Aorta (tissue), 5 donors: ENCODE measurements at regions of chr20 and their contacts with region 1.

Region 1: DNA sequence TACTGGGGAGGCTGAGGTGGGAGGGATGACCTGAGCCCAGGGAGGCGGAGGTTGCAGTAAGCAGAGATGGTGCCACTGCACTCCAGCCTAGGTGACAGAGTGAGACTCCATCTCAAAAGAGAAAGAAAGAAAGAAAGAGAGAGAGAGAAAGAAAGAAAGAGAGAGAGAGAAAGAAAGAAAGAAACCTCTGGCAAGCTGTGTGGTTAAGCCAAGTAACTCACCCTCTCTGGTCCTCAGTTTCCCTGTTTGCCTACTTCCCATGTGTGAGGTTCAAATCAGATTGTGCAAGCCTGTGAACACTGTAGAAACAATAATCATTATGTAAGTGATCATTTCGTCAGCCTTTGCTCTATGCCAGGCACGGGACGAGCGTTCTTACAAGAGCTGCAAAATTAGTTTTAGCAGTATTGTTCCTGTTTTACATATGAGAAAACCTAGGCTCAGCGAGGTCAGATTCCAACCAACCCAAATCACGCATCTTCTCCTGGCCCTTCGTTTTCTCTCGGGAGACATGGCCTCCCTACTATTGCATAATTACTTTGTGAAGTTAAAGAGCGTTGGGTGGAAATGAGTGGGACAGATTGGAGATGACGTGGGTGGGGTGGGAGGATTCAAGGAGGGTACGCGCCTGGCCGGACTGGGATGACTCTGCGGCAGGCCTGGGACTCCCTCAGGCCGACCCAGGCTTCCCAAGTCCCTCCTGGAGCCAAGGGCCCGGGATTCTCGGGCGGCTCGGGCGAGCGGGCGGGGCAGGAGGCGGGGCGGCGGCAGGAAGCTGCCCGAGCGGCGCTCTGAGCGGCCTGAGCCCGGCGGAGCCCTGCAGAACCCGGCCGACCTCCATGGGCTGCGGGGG is at the start of gene SNX21:
- DNase-seq: peak; percentile 91 to 94
- ATAC-seq: peak; percentile 92
- H3K4me3 ChIP-seq: peak within 1 kb of the TSS; percentile 62 to 75
- H3K27ac ChIP-seq: peak within 1 kb of the TSS; percentile 71 to 92
- H3K4me1 ChIP-seq: peaks cover 0 to 1% of the 10 kb centered on the region in 2 donors
- H3K27me3 ChIP-seq: no peaks in the 10 kb centered on the region
- total RNA-seq, gene SNX21: 36.2 to 57.7 TPM

Region 2: DNA sequence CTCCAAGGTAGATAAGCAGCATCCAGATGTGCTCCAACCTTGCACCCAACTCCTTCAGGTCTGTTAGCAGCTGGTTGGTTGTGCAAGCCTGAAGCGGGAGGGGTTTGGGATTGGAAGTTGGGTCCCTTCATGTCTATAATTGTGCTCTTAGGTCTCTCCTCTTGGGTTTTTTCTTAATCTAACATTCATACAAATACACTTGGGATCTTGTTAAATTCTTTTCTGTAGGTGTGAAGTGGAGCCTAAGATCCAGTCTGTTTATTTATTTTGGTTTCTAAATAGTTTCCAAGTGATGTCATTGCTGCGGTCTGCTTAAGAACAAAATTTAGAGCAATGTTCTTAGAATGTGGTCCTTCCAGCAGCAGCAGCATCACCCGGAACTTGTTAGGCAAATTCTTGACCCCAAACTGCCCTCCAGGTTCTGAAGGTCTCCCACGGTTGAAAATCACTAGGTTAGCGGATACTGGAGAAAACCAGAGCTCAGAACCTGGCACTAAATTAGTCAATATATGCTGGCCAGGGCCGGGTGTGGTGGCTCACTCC is 15.5 kb before region 1 on chr20:
- intact Hi-C with region 1: loop called in 1 of 2 experiments (anchors 2 kb)
- DNase-seq: no peak
- ATAC-seq: peak; percentile 58
- H3K4me3 ChIP-seq: no peak overlapping the region
- H3K27ac ChIP-seq: peak overlapping the region; percentile 3 to 98
- H3K4me1 ChIP-seq: peaks cover 0 to 6% of the 10 kb centered on the region in 2 donors
- H3K27me3 ChIP-seq: no peaks in the 10 kb centered on the region

Region 3: GRCh38 chr20:45857114-45857881 is 24.0 kb after region 1 on chr20 and contains the starts of genes ACOT8 and ZSWIM3:
- intact Hi-C with region 1: loop called in 1 of 2 experiments (anchors 2 kb)
- DNase-seq: peak; percentile 90 to 96
- ATAC-seq: peak; percentile 97
- H3K4me3 ChIP-seq: peak within 1 kb of the TSS; percentile 77 to 91
- H3K27ac ChIP-seq: peak within 1 kb of the TSS in 1 of 2 donors; percentile 39
- H3K4me1 ChIP-seq: peaks cover 0 to 3% of the 10 kb centered on the region in 2 donors
- H3K27me3 ChIP-seq: no peaks in the 10 kb centered on the region
- total RNA-seq, gene ACOT8: 11.2 to 15.8 TPM
- total RNA-seq, gene ZSWIM3: 2.5 to 4.5 TPM

Region 4: GRCh38 chr20:45880988-45881788 is 47.9 kb after region 1 on chr20 and contains the start of gene ZSWIM1:
- intact Hi-C with region 1: loop called in 1 of 2 experiments (anchors 10 kb)
- DNase-seq: peak; percentile 99 to 100
- ATAC-seq: peak; percentile 97
- H3K4me3 ChIP-seq: peak within 1 kb of the TSS; percentile 29 to 45
- H3K27ac ChIP-seq: peak within 1 kb of the TSS in 1 of 2 donors; percentile 74
- H3K4me1 ChIP-seq: no peaks in the 10 kb centered on the region
- H3K27me3 ChIP-seq: no peaks in the 10 kb centered on the region
- total RNA-seq, gene ZSWIM1: 5.3 to 8.2 TPM